Dendritic cell treated with granulocyte-macrophage colony-stimulating factor and Interleukin-4, amounts not matched to agents 40 ng/mL and 50 ng/mL, for 4 days (primary cell): ENCODE measurements at regions of chr3 and their contacts with region 1.

Region 1: GRCh38 chr3:38003371-38003816 is 12.8 kb downstream of the VILL start:
- H3K4me3 Mint-ChIP-seq: no peak overlapping the region
- H3K27ac Mint-ChIP-seq: no peak overlapping the region
- H3K4me1 Mint-ChIP-seq: peaks cover 43% of the 10 kb centered on the region
- H3K27me3 Mint-ChIP-seq: no peaks in the 10 kb centered on the region

Region 2: DNA sequence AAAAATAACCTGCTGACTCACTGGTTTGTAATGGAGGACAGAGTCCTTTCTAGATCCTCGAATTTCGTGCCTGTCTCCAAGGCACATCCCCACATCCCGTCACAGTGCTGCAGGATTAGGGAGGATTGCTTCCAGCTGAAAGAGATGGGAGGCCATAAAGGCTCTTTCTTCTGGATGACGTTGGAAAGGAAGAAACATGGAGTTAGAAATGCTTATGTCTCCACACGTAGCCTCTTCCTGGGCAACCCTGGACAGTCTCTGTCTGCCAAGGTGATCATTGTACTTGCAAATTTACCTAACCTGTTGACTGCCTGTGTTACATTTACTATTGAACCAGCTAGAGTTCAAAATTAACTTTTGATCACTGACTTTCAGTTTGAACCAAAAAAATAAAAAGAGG is 40.4 kb before region 1 on chr3:
- intact Hi-C with region 1: no loop called
- H3K4me3 Mint-ChIP-seq: no peak overlapping the region
- H3K27ac Mint-ChIP-seq: no peak overlapping the region
- H3K4me1 Mint-ChIP-seq: no peaks in the 10 kb centered on the region
- H3K27me3 Mint-ChIP-seq: no peaks in the 10 kb centered on the region

Region 3: DNA sequence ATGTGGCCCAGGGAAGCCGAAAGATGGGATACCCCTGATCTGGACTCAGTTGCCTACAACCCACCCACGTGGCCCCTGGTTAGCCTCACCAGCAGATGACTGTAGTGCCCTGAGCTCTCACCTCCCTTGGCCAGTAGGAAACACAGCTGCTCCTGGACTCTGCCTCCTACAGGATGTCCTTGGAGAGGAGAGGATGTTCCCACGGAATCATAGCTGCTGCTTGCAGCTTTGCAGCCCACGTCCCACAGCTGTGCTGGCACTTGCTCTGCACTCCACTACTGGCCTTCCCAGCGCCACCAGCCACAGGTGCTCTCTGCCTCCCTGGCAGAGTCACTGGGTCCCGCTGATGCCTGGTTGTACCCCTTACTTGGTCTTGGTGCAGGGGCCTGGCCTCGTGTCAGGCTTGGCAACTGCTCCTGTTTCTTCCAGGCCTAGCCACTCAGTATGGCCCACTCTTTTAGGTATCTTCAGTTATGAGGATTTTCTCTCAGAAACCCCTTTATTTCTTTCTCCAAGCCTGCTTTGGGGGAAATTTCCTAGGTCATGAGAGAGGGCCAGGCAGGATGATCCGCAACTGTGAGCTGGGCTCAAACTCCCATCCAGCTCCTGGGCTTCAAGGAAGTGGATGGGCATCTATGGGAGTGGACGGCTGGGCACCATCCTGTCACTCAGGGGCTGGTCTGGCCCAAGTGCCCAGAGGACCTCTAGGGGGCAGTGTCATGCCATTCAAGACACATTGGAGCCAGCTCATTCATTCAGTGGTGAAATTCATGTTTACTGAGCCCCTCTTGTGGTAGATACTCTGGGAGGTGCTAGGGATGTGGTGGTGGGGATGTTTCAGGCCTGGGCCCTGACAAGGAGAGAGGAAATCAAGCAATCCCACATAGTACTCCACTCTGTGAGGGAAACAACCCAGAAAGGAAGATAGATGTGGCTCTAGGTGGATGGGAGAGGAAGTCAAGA is 29.0 kb before region 1 on chr3:
- intact Hi-C with region 1: loop called (anchors 1 kb)
- H3K4me3 Mint-ChIP-seq: no peak overlapping the region
- H3K27ac Mint-ChIP-seq: no peak overlapping the region
- H3K4me1 Mint-ChIP-seq: peaks cover 18% of the 10 kb centered on the region
- H3K27me3 Mint-ChIP-seq: no peaks in the 10 kb centered on the region

Region 4: GRCh38 chr3:38281895-38282675 is 278.7 kb after region 1 on chr3 and contains the start of gene SLC22A14:
- intact Hi-C with region 1: no loop called
- H3K4me3 Mint-ChIP-seq: no peak within 1 kb of the TSS
- H3K27ac Mint-ChIP-seq: no peak within 1 kb of the TSS
- H3K4me1 Mint-ChIP-seq: no peaks in the 10 kb centered on the region
- H3K27me3 Mint-ChIP-seq: no peaks in the 10 kb centered on the region